Gastrocnemius medialis (tissue), 4 donors: ENCODE measurements at regions of chr3 and their contacts with region 1.

Region 1: GRCh38 chr3:9362731-9363530 is at the start of gene THUMPD3:
- DNase-seq: peak; percentile 81 to 86
- ATAC-seq: peak; percentile 95 to 97
- H3K4me3 ChIP-seq: peak within 1 kb of the TSS; percentile 70 to 96 (median 79)
- H3K27ac ChIP-seq: peak within 1 kb of the TSS; percentile 85 to 97 (median 89)
- H3K4me1 ChIP-seq: peaks cover 20 to 21% of the 10 kb centered on the region in 2 donors
- H3K27me3 ChIP-seq: no peaks in the 10 kb centered on the region
- CTCF ChIP-seq: peak in 1 of 5 experiments; percentile 24
- POLR2A ChIP-seq: peak; percentile 66 to 85
- total RNA-seq, gene THUMPD3: 22.2 to 39.8 (median 25.2) TPM

Region 2: GRCh38 chr3:9422712-9423424 is 59.9 kb after region 1 on chr3:
- in situ Hi-C with region 1: loop called in 1 of 4 experiments (anchors 5 kb)
- intact Hi-C with region 1: loop called (anchors 2 kb)
- DNase-seq: peak; percentile 82 to 85
- ATAC-seq: peak; percentile 98 to 99
- H3K4me3 ChIP-seq: peak overlapping the region in 1 of 4 donors; percentile 6
- H3K27ac ChIP-seq: peak overlapping the region; percentile 82 to 86 (median 84)
- H3K4me1 ChIP-seq: peaks cover 49 to 54% of the 10 kb centered on the region in 2 donors
- H3K27me3 ChIP-seq: no peaks in the 10 kb centered on the region
- CTCF ChIP-seq: peak; percentile 31 to 72 (median 53)
- POLR2A ChIP-seq: no peak

Region 3: DNA sequence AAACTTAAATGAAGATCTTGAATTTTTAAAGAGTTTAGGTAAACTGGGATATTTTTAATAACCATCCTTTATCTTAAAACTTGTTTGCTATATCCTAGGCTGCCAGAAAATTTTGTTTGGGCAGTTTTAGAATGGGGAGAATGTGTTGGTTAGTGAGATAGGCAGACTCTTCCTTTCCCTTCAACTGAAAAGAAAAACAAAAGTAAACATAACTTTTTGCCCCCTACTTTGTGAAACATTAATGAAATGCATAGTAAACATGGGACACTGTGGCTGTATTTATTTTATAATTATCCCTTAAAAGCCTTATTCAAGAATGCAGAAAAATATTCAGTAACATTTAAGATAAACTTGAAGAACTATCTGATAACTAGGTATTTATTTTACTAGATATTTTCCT is 65.5 kb after region 1 on chr3:
- in situ Hi-C with region 1: loop called in 2 of 4 experiments (anchors 5 to 10 kb)
- intact Hi-C with region 1: loop called (anchors 2 kb)
- DNase-seq: no peak
- ATAC-seq: no peak
- H3K4me3 ChIP-seq: no peak overlapping the region
- H3K27ac ChIP-seq: no peak overlapping the region
- H3K4me1 ChIP-seq: peaks cover 12 to 16% of the 10 kb centered on the region in 2 donors
- H3K27me3 ChIP-seq: no peaks in the 10 kb centered on the region
- CTCF ChIP-seq: no peak
- POLR2A ChIP-seq: no peak

Region 4: DNA sequence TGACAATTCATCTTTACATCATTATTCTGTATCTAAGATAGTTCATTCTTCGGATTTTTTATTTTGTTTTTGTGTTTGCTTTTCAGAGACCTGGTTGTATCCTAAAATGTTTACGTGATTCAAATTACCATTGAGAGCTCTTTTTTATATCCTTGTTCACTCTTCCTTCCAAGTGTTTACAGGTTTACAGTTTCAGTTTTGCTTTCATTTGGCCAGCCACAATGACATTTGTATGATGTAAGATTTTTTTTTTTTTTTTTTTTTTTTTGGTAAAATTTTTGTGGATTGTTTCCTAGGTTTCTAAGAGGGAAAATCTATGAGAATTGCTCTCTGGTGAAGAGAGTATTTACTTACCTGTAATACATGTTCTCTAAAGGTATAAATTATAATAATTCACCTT is 89.5 kb after region 1 on chr3:
- in situ Hi-C with region 1: loop called in 2 of 4 experiments (anchors 25 kb)
- intact Hi-C with region 1: no loop called
- DNase-seq: no peak
- ATAC-seq: no peak
- H3K4me3 ChIP-seq: no peak overlapping the region
- H3K27ac ChIP-seq: no peak overlapping the region
- H3K4me1 ChIP-seq: no peaks in the 10 kb centered on the region
- H3K27me3 ChIP-seq: no peaks in the 10 kb centered on the region
- CTCF ChIP-seq: no peak
- POLR2A ChIP-seq: no peak